ENCODE measurements at regions of chr11 and their contacts with region 1.

Region 1: DNA sequence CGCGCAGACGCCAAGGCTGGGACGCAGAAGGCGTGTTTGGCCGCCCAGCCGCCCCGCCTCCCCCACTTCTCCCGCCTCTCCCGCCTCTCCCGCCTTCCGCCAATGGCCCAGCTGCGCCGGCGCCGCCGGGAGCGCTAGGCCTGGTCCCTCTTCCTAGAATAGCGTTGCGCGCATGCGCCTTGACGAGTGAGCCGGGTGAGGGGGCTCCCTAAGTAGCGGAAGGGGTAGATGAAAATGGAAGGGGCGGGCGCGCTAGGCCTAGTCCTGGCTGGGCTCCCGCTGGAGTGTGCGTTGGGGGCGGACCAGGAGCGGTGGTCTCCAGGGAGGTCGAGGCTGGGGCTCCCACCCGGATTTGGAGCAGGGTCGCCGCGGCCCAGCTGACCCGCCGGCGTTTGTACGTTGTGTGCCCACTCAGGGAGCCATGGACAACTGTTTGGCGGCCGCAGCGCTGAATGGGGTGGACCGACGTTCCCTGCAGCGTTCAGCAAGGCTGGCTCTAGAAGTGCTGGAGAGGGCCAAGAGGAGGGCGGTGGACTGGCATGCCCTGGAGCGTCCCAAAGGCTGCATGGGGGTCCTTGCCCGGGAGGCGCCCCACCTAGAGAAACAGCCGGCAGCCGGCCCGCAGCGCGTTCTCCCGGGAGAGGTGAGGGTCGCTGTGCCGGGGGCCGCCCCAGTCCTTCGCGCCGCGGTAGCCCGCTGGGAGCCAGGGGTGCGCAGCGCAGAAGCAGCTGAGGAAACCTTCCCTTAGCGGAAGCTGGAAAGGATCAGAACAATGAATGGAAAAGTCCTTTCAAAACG is at the start of gene AKIP1:
- DNase-seq: peak; percentile 98
- ATAC-seq: peak; percentile 92
- H3K4me3 Mint-ChIP-seq: peak within 1 kb of the TSS; percentile 84
- H3K27ac Mint-ChIP-seq: peak within 1 kb of the TSS; percentile 68; the same call in 1 of the 2 replicates
- H3K4me1 Mint-ChIP-seq: peaks cover 29% of the 10 kb centered on the region
- H3K27me3 Mint-ChIP-seq: peaks cover 28% of the 10 kb centered on the region
- CTCF ChIP-seq: no peak
- total RNA-seq, gene AKIP1: 21.1 to 26.0 TPM (median 22.0 TPM) in 3 replicates

Region 2: GRCh38 chr11:8290081-8290810 is 621.0 kb before region 1 on chr11:
- CTCF ChIA-PET with region 1: no interaction called
- POLR2A ChIA-PET with region 1: interaction called, 10 read pairs
- DNase-seq: no peak
- ATAC-seq: no peak
- H3K4me3 Mint-ChIP-seq: no peak overlapping the region
- H3K27ac Mint-ChIP-seq: no peak overlapping the region
- H3K4me1 Mint-ChIP-seq: 0 out of 2 replicates have a peak, but pooled peaks cover 2% of the 10 kb centered on the region
- H3K27me3 Mint-ChIP-seq: peaks cover 5% of the 10 kb centered on the region; the same call in 1 of the 2 replicates
- CTCF ChIP-seq: no peak

Measured in WTC11 (cell line).